ENCODE measurements at regions of chrX and their contacts with region 1.

Region 1: GRCh38 chrX:129905787-129906580 is at the start of gene UTP14A:
- DNase-seq: peak; percentile 90
- ATAC-seq: peak; percentile 97
- H3K4me3 Mint-ChIP-seq: peak within 1 kb of the TSS; percentile 88
- H3K27ac Mint-ChIP-seq: peak within 1 kb of the TSS; percentile 92
- H3K4me1 Mint-ChIP-seq: peaks cover 25% of the 10 kb centered on the region
- H3K27me3 Mint-ChIP-seq: no peaks in the 10 kb centered on the region
- total RNA-seq, gene UTP14A: 35.7 to 45.2 TPM

Region 2: DNA sequence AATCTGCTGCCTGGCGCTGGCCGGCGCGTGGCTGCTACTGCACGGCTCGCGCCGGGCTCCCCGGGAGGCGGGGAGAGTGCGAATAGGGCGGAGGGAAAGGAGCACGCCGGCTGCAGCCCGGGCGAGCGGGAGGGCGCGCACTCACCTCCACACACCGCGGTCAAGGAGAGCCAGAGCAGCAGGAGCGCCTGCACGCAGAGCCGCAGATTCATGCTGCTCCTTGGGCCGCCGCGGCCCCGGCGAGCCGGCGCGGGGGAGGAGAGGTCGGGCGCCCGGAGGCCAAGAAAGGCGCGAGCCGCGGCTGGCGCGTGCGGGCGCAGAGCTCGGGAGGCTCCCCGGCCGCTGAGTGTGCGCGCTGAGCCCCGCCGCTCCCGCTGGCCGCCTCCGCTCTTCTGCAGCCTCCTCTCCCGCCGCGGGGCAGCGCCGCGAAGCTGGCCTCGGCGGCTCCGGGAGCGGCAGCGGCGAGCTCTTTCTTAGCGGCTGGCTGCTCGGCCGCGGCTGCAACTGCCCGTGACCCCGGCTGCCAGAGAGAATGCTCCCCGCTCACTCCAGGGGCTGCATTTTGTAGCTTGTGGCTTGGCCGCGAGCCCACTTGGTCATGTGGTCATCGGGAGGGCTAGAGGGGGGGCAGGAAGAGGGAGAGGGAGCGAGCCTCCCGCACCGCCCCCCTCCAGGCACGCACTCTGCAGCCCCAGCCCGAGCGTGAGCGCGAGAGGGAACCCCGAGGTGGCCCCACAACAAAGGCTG is 251.4 kb before region 1 on chrX and contains the start of gene APLN:
- CTCF ChIA-PET with region 1: no interaction called
- POLR2A ChIA-PET with region 1: no interaction called
- intact Hi-C with region 1: loop called in 1 of 2 experiments (anchors 2 kb)
- DNase-seq: peak; percentile 38
- ATAC-seq: peak; percentile 70
- H3K4me3 Mint-ChIP-seq: peak within 1 kb of the TSS; percentile 63
- H3K27ac Mint-ChIP-seq: no peak within 1 kb of the TSS
- H3K4me1 Mint-ChIP-seq: peaks cover 9% of the 10 kb centered on the region
- H3K27me3 Mint-ChIP-seq: peaks cover 10% of the 10 kb centered on the region
- total RNA-seq, gene APLN: 1.9 to 2.1 TPM

Region 3: DNA sequence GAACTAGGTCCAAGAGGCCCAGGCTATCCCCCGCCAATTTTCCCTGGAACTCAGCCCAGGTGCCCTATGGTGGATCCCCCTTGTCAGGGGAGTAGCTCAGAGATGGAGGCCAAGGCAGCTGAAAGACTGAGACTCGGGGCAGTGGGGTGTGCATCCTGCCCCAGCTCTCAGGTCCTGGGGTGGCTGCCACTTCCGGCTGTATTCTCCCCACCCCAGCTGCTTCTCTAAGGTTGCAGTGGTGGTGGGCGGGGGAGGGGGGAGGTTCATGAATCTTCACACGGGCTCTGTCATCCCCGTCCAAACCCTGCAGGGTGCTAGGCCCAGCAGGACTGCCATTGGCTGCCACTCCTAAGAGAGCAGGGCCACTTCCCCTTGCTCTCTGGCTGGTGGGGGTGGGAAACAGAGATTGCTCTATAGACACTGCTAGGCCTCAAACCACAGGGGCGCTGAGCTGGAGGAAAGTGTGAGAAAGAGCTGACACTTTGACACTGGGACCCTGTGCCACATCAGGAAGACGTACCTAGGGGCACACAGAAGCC is 124.8 kb before region 1 on chrX:
- CTCF ChIA-PET with region 1: interaction called, 3 read pairs
- POLR2A ChIA-PET with region 1: no interaction called
- intact Hi-C with region 1: loop called in 1 of 2 experiments (anchors 1 kb)
- DNase-seq: peak; percentile 91
- ATAC-seq: peak; percentile 80
- H3K4me3 Mint-ChIP-seq: peak overlapping the region; percentile 79
- H3K27ac Mint-ChIP-seq: peak overlapping the region; percentile 97
- H3K4me1 Mint-ChIP-seq: peaks cover 50% of the 10 kb centered on the region
- H3K27me3 Mint-ChIP-seq: no peaks in the 10 kb centered on the region

Region 4: DNA sequence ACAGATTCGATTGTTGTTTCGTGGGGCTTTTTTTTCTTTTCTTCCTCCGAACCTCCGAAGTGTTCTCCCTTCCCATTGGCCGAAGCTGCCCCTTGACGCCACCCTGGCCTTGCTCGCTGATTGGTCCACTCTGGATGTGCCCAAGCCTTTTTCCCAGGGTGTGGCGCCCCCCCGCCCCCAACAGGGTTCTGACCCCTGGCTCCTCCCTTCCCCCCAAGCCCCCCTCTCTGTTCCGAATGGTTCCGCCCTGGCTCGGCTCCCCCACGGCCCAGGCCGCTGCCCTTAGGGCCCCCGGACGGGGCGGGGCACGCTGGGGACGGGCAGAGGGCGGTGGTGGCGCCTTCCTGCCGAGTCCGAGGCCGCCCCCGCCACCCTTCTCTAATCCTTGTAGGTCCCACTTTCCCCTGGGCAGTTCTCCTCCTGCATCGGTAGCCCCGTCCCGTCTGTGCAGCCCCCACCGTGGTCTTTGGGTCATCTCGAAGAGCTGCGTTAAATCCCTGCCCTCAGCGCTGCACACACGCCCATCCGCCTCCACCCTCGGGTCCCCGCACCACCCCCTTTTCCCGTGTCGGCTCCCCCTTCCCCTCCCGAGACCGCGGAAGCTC is 25.5 kb after region 1 on chrX:
- CTCF ChIA-PET with region 1: no interaction called
- POLR2A ChIA-PET with region 1: no interaction called
- intact Hi-C with region 1: loop called in 1 of 2 experiments (anchors 1 kb)
- DNase-seq: peak; percentile 75
- ATAC-seq: peak; percentile 78
- H3K4me3 Mint-ChIP-seq: peak overlapping the region; percentile 62
- H3K27ac Mint-ChIP-seq: peak overlapping the region; percentile 73
- H3K4me1 Mint-ChIP-seq: peaks cover 4% of the 10 kb centered on the region
- H3K27me3 Mint-ChIP-seq: peaks cover 2% of the 10 kb centered on the region

Region 5: GRCh38 chrX:130091958-130092522 is 186.1 kb after region 1 on chrX:
- CTCF ChIA-PET with region 1: no interaction called
- POLR2A ChIA-PET with region 1: no interaction called
- intact Hi-C with region 1: no loop called
- DNase-seq: peak; percentile 93
- ATAC-seq: peak; percentile 98
- H3K4me3 Mint-ChIP-seq: peak overlapping the region; percentile 78
- H3K27ac Mint-ChIP-seq: peak overlapping the region; percentile 97
- H3K4me1 Mint-ChIP-seq: peaks cover 63% of the 10 kb centered on the region
- H3K27me3 Mint-ChIP-seq: no peaks in the 10 kb centered on the region

Region 6: DNA sequence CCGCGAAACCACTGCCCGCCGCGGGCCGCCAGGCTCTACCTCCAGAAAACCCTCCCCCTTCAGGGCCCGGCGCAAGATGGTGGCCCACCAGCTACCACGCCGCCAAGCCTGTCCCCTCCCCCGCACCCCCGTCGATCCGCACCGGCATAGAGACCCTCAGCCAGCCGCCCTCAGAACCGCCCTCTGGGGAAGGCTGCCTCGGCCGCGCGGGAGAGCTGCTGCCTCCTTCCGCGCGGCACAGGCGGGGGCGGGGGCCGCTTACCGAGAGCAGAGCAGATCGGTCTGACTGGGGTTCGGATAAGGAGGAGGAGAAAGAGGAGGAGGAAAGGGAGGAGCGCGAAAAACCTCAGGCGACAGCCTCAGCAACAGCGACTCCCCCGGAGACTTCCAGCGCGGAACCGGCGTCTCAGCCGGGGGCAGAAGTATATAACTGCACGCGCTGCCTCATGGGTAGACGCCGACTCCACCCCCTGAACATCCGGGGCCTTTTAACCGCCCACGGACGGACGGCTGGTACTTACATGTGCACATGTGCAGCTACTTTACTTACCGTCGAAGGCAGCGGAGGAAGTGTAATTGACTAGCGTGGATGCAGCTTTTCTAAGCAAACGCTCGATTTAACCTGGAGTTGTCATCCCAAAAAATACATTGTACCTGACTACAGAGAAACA is 362.7 kb after region 1 on chrX and contains the start of gene ZNF280C:
- CTCF ChIA-PET with region 1: no interaction called
- POLR2A ChIA-PET with region 1: no interaction called
- intact Hi-C with region 1: loop called in 1 of 2 experiments (anchors 1 kb)
- DNase-seq: peak; percentile 96
- ATAC-seq: peak; percentile 98
- H3K4me3 Mint-ChIP-seq: peak within 1 kb of the TSS; percentile 85
- H3K27ac Mint-ChIP-seq: peak within 1 kb of the TSS; percentile 83
- H3K4me1 Mint-ChIP-seq: peaks cover 19% of the 10 kb centered on the region
- H3K27me3 Mint-ChIP-seq: no peaks in the 10 kb centered on the region
- total RNA-seq, gene ZNF280C: 5.9 to 8.6 TPM

Region 7: GRCh38 chrX:130401415-130402207 is 495.6 kb after region 1 on chrX and contains the start of gene RBMX2:
- CTCF ChIA-PET with region 1: no interaction called
- POLR2A ChIA-PET with region 1: no interaction called
- intact Hi-C with region 1: loop called in 1 of 2 experiments (anchors 5 kb)
- DNase-seq: peak; percentile 79
- ATAC-seq: peak; percentile 93
- H3K4me3 Mint-ChIP-seq: peak within 1 kb of the TSS; percentile 93
- H3K27ac Mint-ChIP-seq: peak within 1 kb of the TSS; percentile 92
- H3K4me1 Mint-ChIP-seq: peaks cover 13% of the 10 kb centered on the region
- H3K27me3 Mint-ChIP-seq: peaks cover under 1% of the 10 kb centered on the region
- total RNA-seq, gene RBMX2: 25.4 to 26.8 TPM